ENCODE measurements at regions of chr13 and their contacts with region 1.

Region 1: DNA sequence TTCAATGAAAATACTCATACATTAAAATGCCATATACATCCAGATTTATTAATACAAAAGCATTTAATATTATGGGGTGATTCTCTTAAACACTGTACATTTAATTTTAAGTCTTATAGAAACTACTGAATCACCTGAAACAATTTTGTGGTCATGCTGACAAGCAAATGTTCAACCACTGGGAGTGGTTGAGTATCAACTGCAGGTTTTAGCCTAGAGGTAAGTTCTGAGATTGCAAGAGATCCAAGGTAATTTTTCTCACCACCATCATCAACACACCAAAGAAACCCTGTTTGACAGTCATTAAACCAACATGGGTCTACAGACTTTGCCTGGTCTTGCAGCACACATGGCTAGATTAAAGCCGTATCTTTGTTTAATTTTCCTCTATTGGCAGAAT is 196.3 kb downstream of the LHFPL6 start:
- DNase-seq: no peak
- ATAC-seq: no peak
- H3K4me3 ChIP-seq: no peak overlapping the region
- H3K27ac ChIP-seq: peak overlapping the region in 1 of 10 donors; percentile 87
- H3K4me1 ChIP-seq: peaks cover 0 to 89% (median 69%) of the 10 kb centered on the region in 9 donors
- H3K27me3 ChIP-seq: no peaks in the 10 kb centered on the region
- CTCF ChIP-seq: no peak

Region 2: GRCh38 chr13:39321574-39321973 is 85.1 kb before region 1 on chr13:
- intact Hi-C with region 1: loop called in 1 of 10 experiments (anchors 5 kb)
- DNase-seq: no peak
- ATAC-seq: peak in 5 of 8 donors; percentile 27 to 79 (median 60)
- H3K4me3 ChIP-seq: no peak overlapping the region
- H3K27ac ChIP-seq: peak overlapping the region in 2 of 10 donors; percentile 13 to 42
- H3K4me1 ChIP-seq: peaks cover 0 to 71% (median 46%) of the 10 kb centered on the region in 9 donors
- H3K27me3 ChIP-seq: no peaks in the 10 kb centered on the region
- CTCF ChIP-seq: no peak

Measured in heart right ventricle (tissue), 16 donors.